PC-9 (cell line): ENCODE measurements at regions of chr22 and their contacts with region 1.

Region 1: DNA sequence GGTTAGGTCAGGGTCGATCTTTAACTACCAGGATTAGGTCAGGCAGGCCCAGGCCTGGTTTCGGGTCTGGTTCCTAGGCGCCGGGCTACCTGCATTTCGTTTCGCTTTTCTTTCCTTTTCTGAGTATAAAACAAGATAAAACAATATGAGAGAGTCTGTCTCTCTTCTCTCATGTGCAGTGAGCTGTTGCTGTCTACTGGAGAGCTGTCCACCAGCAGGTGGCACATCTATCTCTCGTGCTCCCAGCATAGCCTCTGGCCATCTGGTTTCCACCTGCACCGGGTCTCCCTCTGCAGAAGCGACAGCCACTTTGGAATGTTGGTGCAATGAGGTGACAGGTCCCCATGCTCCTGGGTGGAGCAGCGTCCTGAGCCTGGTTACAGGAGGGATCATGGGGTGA is 27.6 kb downstream of the RIBC2 start:
- DNase-seq: peak; percentile 77 to 81
- H3K4me3 ChIP-seq: peak overlapping the region; percentile 21; the same call in 1 of the 2 replicates
- H3K27ac ChIP-seq: peak overlapping the region; percentile 17; the same call in 1 of the 2 replicates
- H3K4me1 ChIP-seq: peaks cover 48% of the 10 kb centered on the region
- H3K27me3 ChIP-seq: no peaks in the 10 kb centered on the region
- CTCF ChIP-seq: peak; percentile 80

Region 2: GRCh38 chr22:44786136-44786535 is 655.0 kb before region 1 on chr22:
- CTCF ChIA-PET with region 1: no interaction called
- POLR2A ChIA-PET with region 1: no interaction called
- intact Hi-C with region 1: no loop called
- DNase-seq: no peak
- H3K4me3 ChIP-seq: no peak overlapping the region
- H3K27ac ChIP-seq: no peak overlapping the region
- H3K4me1 ChIP-seq: no peaks in the 10 kb centered on the region
- H3K27me3 ChIP-seq: no peaks in the 10 kb centered on the region
- CTCF ChIP-seq: no peak

Region 3: DNA sequence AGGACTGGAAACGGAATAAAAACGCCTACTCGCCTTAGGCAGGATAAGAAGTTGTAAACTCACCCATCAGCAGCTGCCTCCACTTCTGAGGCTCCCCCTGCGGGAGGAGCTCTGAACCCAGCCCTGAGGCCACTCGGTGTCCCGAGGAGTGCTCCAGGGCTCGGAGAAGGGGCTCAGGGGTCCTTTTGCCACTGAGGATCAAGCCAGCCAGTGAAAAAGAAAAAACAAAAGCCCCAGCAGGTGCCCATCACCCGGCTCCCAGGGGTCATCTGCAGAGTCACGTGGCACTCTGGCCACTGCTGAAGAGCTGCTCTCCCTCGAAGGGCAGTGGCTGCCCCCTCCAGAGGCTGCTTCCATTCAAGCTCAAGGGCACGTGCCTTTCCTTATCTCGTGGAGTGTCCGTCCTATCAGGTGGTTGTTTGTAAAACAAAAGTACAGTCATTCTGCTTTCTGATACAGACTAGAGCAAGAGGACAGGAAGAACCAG is 248.4 kb before region 1 on chr22:
- CTCF ChIA-PET with region 1: interaction called, 12 read pairs
- POLR2A ChIA-PET with region 1: no interaction called
- intact Hi-C with region 1: no loop called
- DNase-seq: no peak
- H3K4me3 ChIP-seq: no peak overlapping the region
- H3K27ac ChIP-seq: no peak overlapping the region
- H3K4me1 ChIP-seq: no peaks in the 10 kb centered on the region
- H3K27me3 ChIP-seq: no peaks in the 10 kb centered on the region
- CTCF ChIP-seq: no peak

Region 4: GRCh38 chr22:45516923-45517675 is 76.0 kb after region 1 on chr22:
- CTCF ChIA-PET with region 1: no interaction called
- POLR2A ChIA-PET with region 1: no interaction called
- intact Hi-C with region 1: loop called (anchors 1 kb)
- DNase-seq: peak; percentile 93 to 97
- H3K4me3 ChIP-seq: no peak overlapping the region
- H3K27ac ChIP-seq: peak overlapping the region; percentile 77
- H3K4me1 ChIP-seq: peaks cover 74% of the 10 kb centered on the region
- H3K27me3 ChIP-seq: no peaks in the 10 kb centered on the region
- CTCF ChIP-seq: no peak

Region 5: DNA sequence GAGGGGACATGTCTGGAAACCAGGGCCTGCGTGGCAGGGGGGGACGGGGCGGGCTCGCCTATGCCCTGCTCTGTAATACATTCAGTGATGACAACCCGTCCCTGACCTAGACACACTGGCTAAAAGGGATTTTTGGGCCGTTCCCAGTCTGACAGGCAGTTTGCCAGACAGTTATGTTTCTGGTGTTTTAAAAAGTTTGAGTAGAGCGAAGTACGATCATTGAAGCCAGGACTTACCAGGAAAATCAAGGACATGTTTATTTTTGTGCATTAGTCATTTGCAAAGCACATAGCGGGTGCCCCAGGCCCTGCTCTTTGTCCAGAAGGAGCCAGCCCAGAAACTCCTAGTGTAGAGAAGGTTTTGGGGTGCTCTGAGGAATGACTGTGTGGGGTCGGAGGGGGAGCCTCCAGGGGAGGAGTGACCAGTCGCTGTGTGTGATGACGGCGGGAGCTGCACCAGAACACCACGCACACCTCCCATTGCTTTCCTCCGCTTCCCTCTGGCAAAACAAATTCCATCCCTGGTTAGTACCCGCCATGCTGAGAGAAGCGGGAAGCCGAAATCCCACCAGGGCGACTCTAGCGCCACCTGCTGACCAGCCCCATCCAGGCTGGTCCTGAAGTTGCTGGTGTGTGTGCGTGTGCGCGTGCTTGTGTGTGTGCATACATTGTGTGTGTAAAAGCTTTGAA is 112.4 kb after region 1 on chr22:
- CTCF ChIA-PET with region 1: interaction called, 6 read pairs
- POLR2A ChIA-PET with region 1: no interaction called
- intact Hi-C with region 1: loop called (anchors 1 kb)
- DNase-seq: peak; percentile 35 to 67
- H3K4me3 ChIP-seq: no peak overlapping the region
- H3K27ac ChIP-seq: no peak overlapping the region
- H3K4me1 ChIP-seq: peaks cover 35% of the 10 kb centered on the region
- H3K27me3 ChIP-seq: no peaks in the 10 kb centered on the region
- CTCF ChIP-seq: peak; percentile 76